ENCODE measurements at regions of chr10 and their contacts with region 1.

Region 1: GRCh38 chr10:71638064-71638821 is 81.3 kb downstream of the C10orf105 start:
- DNase-seq: no peak
- H3K4me3 ChIP-seq: no peak overlapping the region
- H3K27ac ChIP-seq: no peak overlapping the region
- H3K4me1 ChIP-seq: no peaks in the 10 kb centered on the region
- H3K27me3 ChIP-seq: peaks cover 3% of the 10 kb centered on the region
- CTCF ChIP-seq: no peak

Region 2: GRCh38 chr10:71684356-71685173 is 46.3 kb after region 1 on chr10:
- CTCF ChIA-PET with region 1: no interaction called
- dilution Hi-C with region 1: loop called (anchors 5 kb)
- in situ Hi-C with region 1: no loop called
- intact Hi-C with region 1: no loop called
- DNase-seq: no peak
- H3K4me3 ChIP-seq: no peak overlapping the region
- H3K27ac ChIP-seq: no peak overlapping the region
- H3K4me1 ChIP-seq: no peaks in the 10 kb centered on the region
- H3K27me3 ChIP-seq: no peaks in the 10 kb centered on the region
- CTCF ChIP-seq: no peak